BJ (cell line): ENCODE measurements at regions of chr7 and their contacts with region 1.

Region 1: DNA sequence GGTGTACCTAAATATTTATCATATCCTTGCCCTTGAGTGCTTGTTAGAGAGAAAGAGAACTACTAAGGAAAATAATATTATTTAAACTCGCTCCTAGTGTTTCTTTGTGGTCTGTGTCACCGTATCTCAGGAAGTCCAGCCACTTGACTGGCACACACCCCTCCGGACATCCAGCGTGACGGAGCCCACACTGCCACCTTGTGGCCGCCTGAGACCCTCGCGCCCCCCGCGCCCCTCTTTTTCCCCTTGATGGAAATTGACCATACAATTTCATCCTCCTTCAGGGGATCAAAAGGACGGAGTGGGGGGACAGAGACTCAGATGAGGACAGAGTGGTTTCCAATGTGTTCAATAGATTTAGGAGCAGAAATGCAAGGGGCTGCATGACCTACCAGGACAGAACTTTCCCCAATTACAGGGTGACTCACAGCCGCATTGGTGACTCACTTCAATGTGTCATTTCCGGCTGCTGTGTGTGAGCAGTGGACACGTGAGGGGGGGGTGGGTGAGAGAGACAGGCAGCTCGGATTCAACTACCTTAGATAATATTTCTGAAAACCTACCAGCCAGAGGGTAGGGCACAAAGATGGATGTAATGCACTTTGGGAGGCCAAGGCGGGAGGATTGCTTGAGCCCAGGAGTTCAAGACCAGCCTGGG is 11.4 kb downstream of the SERPINE1 start:
- DNase-seq: peak; percentile 83
- H3K4me3 ChIP-seq: no peak overlapping the region
- H3K27me3 ChIP-seq: no peaks in the 10 kb centered on the region
- CTCF ChIP-seq: peak; percentile 86

Region 2: DNA sequence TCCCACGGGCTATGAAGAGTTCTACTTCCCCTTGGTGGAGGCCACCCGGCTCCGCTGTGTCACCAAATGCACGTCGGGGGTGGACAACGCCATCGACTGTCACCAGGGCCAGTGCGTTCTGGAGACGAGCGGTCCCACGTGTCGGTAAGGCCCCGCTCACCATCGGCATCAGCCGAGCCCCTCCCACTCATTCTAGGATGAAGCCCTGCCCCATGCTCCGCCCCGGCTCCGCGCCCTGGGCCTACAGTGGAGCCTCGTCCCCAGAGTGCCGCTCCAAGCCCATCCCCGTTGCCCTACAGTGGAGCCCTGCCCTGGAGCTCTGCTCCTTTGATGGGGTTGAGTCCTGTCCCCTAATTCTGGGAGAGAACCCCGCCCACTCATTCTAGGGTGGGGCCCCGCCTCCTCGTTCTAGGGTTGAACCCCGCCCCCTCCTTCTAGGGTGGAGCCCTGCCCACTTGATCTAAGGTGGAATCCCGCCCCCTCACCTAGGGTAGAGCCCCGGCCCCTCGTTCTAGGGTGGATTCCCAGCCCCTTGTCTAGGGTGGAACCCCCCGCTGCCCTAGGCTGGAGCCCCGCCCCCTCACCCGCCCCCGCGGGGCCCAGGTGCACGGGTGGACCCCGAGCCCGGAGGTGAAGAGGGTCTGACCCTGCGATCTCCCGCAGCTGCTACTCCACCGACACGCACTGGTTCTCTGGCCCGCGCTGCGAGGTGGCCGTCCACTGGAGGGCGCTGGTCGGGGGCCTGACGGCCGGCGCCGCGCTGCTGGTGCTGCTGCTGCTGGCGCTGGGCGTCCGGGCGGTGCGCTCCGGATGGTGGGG is 172.4 kb before region 1 on chr7:
- CTCF ChIA-PET with region 1: no interaction called
- POLR2A ChIA-PET with region 1: no interaction called
- DNase-seq: no peak
- H3K4me3 ChIP-seq: no peak overlapping the region
- H3K27me3 ChIP-seq: peaks cover 29% of the 10 kb centered on the region
- CTCF ChIP-seq: peak; percentile 76

Region 3: GRCh38 chr7:101077303-101078089 is 60.8 kb before region 1 on chr7:
- CTCF ChIA-PET with region 1: interaction called, 18 read pairs
- POLR2A ChIA-PET with region 1: no interaction called
- DNase-seq: no peak
- H3K4me3 ChIP-seq: no peak overlapping the region
- H3K27me3 ChIP-seq: no peaks in the 10 kb centered on the region; the same call in 1 of the 2 replicates
- CTCF ChIP-seq: peak; percentile 98

Region 4: GRCh38 chr7:101099969-101100781 is 38.2 kb before region 1 on chr7:
- CTCF ChIA-PET with region 1: interaction called, 25 read pairs
- POLR2A ChIA-PET with region 1: interaction called, 3 read pairs
- DNase-seq: peak; percentile 96
- H3K4me3 ChIP-seq: no peak overlapping the region
- H3K27me3 ChIP-seq: no peaks in the 10 kb centered on the region
- CTCF ChIP-seq: no peak

Region 5: DNA sequence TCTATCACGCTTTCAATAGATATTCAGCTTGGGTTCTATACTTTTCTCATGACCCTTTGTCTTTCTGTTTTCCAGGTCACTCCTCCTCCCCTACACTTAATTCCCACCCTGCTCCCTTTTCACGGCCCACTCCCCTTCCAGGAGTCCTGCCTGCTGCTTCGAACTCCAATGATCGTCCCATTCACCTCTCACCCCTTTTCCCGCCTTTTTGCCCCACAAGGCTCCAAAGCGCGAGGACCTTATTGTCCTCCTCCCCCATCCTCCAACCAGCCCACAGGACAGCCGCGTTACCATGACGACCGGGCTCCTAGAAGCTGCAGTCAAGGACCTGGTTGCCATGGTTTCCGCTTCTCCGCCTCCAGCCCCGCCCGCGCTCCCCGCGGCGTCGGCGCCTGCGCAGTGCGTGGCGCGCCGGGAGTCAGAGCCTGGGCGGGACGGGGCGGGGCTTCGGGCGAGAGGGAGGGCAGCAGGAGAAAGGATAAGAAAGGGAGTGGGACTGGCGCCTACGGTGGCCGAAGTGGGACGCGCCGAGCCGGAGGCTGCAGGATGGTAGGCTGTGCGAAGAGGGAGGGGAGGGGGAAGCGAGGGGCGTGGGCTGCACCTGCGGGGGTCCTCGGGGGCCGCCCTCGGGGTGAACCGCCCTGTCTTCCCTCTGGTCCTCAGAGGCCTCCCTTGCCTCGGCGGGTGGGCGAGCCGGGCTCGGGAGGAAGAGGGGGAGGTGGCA is 15.8 kb after region 1 on chr7 and contains the start of gene AP1S1:
- CTCF ChIA-PET with region 1: interaction called, 28 read pairs
- POLR2A ChIA-PET with region 1: no interaction called
- DNase-seq: peak; percentile 66
- H3K4me3 ChIP-seq: peak within 1 kb of the TSS; percentile 99
- H3K27me3 ChIP-seq: 0 out of 2 replicates have a peak, but pooled peaks cover 2% of the 10 kb centered on the region
- CTCF ChIP-seq: no peak
- polyA plus RNA-seq, gene AP1S1: 186 and 270 TPM in 2 replicates

Region 6: GRCh38 chr7:101195884-101196283 is 57.5 kb after region 1 on chr7:
- CTCF ChIA-PET with region 1: interaction called, 158 read pairs
- POLR2A ChIA-PET with region 1: interaction called, 11 read pairs
- DNase-seq: no peak
- H3K4me3 ChIP-seq: no peak overlapping the region
- H3K27me3 ChIP-seq: peaks cover 7% of the 10 kb centered on the region
- CTCF ChIP-seq: no peak

Region 7: GRCh38 chr7:101278461-101279292 is 140.3 kb after region 1 on chr7:
- CTCF ChIA-PET with region 1: interaction called, 97 read pairs
- POLR2A ChIA-PET with region 1: no interaction called
- DNase-seq: no peak
- H3K4me3 ChIP-seq: no peak overlapping the region
- H3K27me3 ChIP-seq: peaks cover 6% of the 10 kb centered on the region
- CTCF ChIP-seq: no peak

Region 8: DNA sequence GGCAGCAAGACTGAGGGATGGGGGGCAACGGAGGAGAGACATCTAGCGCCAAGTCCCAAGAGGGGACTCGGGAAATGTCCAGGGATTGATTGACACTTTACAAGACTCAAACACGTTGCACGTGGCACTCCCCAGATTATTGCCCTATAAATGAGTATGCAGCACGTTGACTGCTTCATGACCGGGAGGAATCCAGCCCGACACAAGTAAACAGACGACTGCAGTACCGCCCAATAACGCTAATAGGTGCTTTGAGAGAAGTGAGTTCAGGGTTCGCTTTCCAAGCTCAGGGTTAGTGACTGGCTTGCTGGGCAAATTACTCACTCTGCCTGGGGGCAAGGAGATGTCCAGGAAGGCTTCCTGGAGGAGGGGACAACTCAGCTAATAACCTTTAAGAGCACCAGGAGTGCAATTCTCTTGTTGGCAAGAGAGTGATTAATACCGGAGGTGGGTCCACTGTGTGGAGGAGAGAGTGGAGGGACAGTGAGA is 564.1 kb after region 1 on chr7:
- CTCF ChIA-PET with region 1: no interaction called
- POLR2A ChIA-PET with region 1: no interaction called
- DNase-seq: no peak
- H3K4me3 ChIP-seq: no peak overlapping the region
- H3K27me3 ChIP-seq: peaks cover 10% of the 10 kb centered on the region
- CTCF ChIP-seq: no peak